ENCODE measurements at regions of chr3 and their contacts with region 1.

Region 1: DNA sequence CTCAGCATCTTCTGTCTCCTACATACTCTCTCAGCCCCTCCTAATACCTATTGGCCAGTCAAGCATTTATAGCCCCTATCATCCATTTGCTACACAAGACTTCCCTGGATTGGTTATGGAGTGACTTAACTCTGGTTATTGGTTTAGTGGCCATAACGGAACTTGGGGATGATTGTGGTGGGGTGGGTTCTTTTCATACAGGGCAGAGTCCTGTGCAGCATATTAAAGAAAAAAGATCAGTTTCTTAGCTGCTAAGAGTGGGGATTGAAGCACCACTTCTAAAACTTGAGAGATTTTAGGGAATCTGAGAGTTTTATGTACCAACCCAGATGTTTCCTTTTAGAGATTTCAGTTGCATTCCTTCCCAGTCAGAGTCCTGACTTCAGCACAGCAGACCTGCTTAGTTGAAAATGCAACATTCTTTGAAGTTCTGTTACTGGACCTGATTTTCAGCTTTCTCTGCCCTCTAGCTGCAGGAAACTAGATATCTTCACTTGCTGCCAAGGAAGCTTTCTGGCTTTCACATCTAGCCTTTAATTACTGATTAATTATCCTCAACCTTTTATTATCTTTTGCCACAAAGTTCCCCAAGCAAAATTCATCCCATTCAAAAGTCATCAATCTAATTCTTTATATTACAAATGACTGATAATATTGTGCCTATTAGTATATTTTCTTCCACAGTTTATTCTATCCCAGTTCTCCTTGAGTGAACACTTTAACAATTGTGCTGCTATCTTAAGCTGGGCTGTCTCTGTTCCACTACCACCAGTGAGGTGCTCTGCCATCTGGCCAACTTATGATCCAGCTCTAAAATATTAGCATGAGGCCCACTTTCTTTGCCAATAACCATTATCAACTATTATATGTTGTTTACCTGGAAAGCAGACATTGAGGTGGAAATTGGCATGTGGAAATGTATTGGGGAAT is 906.0 kb upstream of the ALCAM start:
- DNase-seq: peak; percentile 11
- H3K4me3 Mint-ChIP-seq: no peak overlapping the region
- H3K27ac Mint-ChIP-seq: no peak overlapping the region
- H3K4me1 Mint-ChIP-seq: peaks cover 24% of the 10 kb centered on the region
- H3K27me3 Mint-ChIP-seq: no peaks in the 10 kb centered on the region
- CTCF ChIP-seq: no peak

Region 2: DNA sequence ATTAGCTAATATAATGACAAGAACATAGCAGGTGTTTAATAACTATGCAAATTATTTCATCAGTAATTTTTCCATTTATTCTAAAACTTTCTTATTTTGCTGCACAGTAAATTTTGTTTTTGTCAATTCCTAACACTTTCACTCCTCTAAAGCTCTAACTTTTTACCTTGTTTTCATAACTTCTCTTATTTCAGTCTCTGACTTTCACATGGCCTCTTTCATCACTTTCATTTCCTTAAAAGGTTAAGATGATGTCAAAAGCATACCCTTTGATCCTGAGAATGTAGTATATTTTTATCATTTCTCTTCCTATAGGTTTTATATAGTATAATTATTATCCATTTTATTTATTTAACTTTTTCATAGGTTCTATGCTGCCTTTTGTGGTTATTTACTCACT is 419.8 kb before region 1 on chr3:
- CTCF ChIA-PET with region 1: no interaction called
- intact Hi-C with region 1: no loop called
- DNase-seq: no peak
- H3K4me3 Mint-ChIP-seq: no peak overlapping the region
- H3K27ac Mint-ChIP-seq: no peak overlapping the region
- H3K4me1 Mint-ChIP-seq: no peaks in the 10 kb centered on the region
- H3K27me3 Mint-ChIP-seq: no peaks in the 10 kb centered on the region
- CTCF ChIP-seq: no peak

Region 3: GRCh38 chr3:104102386-104102785 is 358.4 kb before region 1 on chr3:
- CTCF ChIA-PET with region 1: no interaction called
- intact Hi-C with region 1: loop called (anchors 10 kb)
- DNase-seq: peak; percentile 19
- H3K4me3 Mint-ChIP-seq: no peak overlapping the region
- H3K27ac Mint-ChIP-seq: no peak overlapping the region
- H3K4me1 Mint-ChIP-seq: no peaks in the 10 kb centered on the region
- H3K27me3 Mint-ChIP-seq: no peaks in the 10 kb centered on the region
- CTCF ChIP-seq: no peak

Region 4: GRCh38 chr3:104165866-104166265 is 294.9 kb before region 1 on chr3:
- CTCF ChIA-PET with region 1: no interaction called
- intact Hi-C with region 1: no loop called
- DNase-seq: no peak
- H3K4me3 Mint-ChIP-seq: no peak overlapping the region
- H3K27ac Mint-ChIP-seq: no peak overlapping the region
- H3K4me1 Mint-ChIP-seq: no peaks in the 10 kb centered on the region
- H3K27me3 Mint-ChIP-seq: no peaks in the 10 kb centered on the region
- CTCF ChIP-seq: no peak

Region 5: GRCh38 chr3:104257486-104257885 is 203.3 kb before region 1 on chr3:
- CTCF ChIA-PET with region 1: no interaction called
- intact Hi-C with region 1: no loop called
- DNase-seq: no peak
- H3K4me3 Mint-ChIP-seq: no peak overlapping the region
- H3K27ac Mint-ChIP-seq: no peak overlapping the region
- H3K4me1 Mint-ChIP-seq: no peaks in the 10 kb centered on the region
- H3K27me3 Mint-ChIP-seq: no peaks in the 10 kb centered on the region
- CTCF ChIP-seq: no peak

Region 6: GRCh38 chr3:104273046-104273649 is 187.6 kb before region 1 on chr3:
- CTCF ChIA-PET with region 1: interaction called, 3 read pairs
- intact Hi-C with region 1: loop called (anchors 10 kb)
- DNase-seq: no peak
- H3K4me3 Mint-ChIP-seq: no peak overlapping the region
- H3K27ac Mint-ChIP-seq: no peak overlapping the region
- H3K4me1 Mint-ChIP-seq: no peaks in the 10 kb centered on the region
- H3K27me3 Mint-ChIP-seq: no peaks in the 10 kb centered on the region
- CTCF ChIP-seq: no peak

Region 7: DNA sequence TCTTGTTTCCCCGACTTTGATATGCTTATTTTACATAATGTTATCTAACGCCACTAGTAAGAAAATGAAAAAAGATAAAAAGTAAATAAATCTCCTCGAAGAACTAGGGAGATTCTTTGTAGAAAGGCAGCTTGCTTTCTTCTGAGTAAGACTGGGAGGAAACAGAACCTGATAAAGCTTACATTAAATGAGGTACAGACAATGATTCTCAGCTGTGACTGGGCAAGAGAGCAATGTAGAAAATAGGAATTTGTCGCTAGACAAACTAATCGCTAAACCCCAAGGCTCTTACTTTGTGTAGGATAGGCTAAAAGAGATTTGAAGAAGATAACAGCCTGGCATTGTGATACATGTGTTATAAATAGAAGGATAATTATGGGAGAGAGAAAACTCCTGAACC is 13.1 kb before region 1 on chr3:
- CTCF ChIA-PET with region 1: interaction called, 11 read pairs
- intact Hi-C with region 1: no loop called
- DNase-seq: no peak
- H3K4me3 Mint-ChIP-seq: no peak overlapping the region
- H3K27ac Mint-ChIP-seq: no peak overlapping the region
- H3K4me1 Mint-ChIP-seq: no peaks in the 10 kb centered on the region
- H3K27me3 Mint-ChIP-seq: no peaks in the 10 kb centered on the region
- CTCF ChIP-seq: no peak